ENCODE measurements at regions of chrX and their contacts with region 1.

Region 1: GRCh38 chrX:29057004-29057403 is 469.8 kb downstream of the IL1RAPL1 start:
- DNase-seq: no peak
- H3K4me3 ChIP-seq: no peak overlapping the region
- H3K27ac ChIP-seq: no peak overlapping the region
- H3K4me1 ChIP-seq: no peaks in the 10 kb centered on the region
- H3K27me3 ChIP-seq: no peaks in the 10 kb centered on the region
- CTCF ChIP-seq: no peak

Region 2: DNA sequence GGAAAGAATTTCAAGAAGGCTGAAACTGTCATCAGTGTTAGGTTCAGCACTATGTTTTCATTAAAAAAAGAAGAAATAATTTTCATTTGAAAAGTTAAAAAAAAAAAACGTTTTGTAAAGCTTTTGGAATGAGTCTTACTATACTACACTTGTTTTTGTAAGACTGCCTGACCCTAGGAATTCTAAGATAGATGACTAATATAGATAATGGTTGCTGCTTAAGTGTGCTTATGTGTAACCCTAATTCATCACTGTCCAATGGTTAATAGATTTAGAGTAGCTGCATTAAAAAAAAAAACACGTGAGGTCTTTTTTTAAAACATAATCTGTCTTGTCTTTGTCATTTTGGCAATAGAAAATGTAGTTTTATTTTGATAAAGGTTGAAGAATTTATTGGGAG is 146.5 kb before region 1 on chrX:
- CTCF ChIA-PET with region 1: no interaction called
- dilution Hi-C with region 1: no loop called
- in situ Hi-C with region 1: no loop called
- intact Hi-C with region 1: no loop called
- DNase-seq: no peak
- H3K4me3 ChIP-seq: no peak overlapping the region
- H3K27ac ChIP-seq: no peak overlapping the region
- H3K4me1 ChIP-seq: no peaks in the 10 kb centered on the region
- H3K27me3 ChIP-seq: no peaks in the 10 kb centered on the region
- CTCF ChIP-seq: no peak

Region 3: DNA sequence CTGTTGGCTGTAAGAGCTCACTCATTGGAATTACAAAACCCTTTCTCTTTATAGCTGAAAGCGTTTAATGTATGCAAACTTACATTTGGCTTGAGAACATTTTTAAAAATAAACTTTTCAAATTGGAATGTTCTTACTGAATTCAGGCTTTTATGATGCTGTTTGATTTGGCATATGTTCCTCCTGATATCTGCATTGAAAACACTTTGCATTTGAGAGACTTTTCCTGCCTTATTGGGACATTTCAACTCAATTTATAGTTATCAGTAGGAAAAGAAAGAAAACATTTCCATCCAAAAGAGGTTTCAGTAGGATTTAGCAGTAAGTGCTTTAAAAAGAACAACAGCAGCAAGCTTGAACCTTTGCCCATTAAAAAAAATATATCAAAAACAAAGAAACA is 50.2 kb after region 1 on chrX:
- CTCF ChIA-PET with region 1: no interaction called
- dilution Hi-C with region 1: loop called (anchors 5 kb)
- in situ Hi-C with region 1: no loop called
- intact Hi-C with region 1: no loop called
- DNase-seq: no peak
- H3K4me3 ChIP-seq: no peak overlapping the region
- H3K27ac ChIP-seq: no peak overlapping the region
- H3K4me1 ChIP-seq: no peaks in the 10 kb centered on the region
- H3K27me3 ChIP-seq: no peaks in the 10 kb centered on the region
- CTCF ChIP-seq: no peak